Heart right ventricle (tissue), 16 donors: ENCODE measurements at regions of chr15 and their contacts with region 1.

Region 1: GRCh38 chr15:63203451-63204090 is 14.2 kb downstream of the RAB8B start:
- DNase-seq: no peak
- ATAC-seq: peak in 1 of 8 donors; percentile 16
- H3K4me3 ChIP-seq: no peak overlapping the region
- H3K27ac ChIP-seq: no peak overlapping the region
- H3K4me1 ChIP-seq: peaks cover 0 to 82% (median 5%) of the 10 kb centered on the region in 9 donors
- H3K27me3 ChIP-seq: no peaks in the 10 kb centered on the region
- CTCF ChIP-seq: no peak

Region 2: DNA sequence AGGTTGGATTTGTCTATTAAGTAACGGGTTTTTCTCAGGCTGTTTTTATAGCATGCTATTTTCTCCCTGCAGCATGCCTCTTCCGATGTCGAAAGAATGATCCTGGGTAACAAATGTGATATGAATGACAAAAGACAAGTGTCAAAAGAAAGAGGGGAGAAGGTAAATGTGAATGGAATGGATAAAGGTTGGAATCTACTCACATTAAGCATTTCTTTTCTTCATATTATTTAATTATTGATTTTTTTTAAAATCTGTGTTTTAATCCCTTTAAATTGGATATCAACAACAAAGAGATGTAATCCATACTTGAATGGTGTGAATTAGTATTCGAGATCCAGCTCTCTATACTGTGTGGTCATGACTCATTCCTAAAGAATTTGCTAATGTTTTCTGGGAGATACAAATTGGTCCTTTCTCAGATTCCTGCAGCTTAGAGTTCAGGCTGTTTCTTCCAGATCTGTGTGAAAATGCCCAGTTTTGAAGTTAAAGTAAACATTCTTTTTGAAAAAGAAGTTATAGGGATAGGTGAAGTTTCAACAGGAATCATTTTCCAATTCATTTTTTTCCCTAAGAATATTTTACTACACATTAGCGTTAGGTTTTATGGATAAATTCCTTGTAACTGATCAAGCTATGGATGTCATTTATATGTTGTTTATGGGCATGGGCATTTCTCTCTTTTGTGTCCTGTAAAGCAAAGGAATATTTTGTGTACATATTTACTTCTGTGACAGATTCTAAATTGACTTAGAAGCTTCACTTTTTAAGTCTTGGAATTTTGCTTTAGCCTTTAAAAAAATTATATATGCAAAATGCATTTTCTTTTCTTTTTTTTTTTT is 53.1 kb after region 1 on chr15:
- intact Hi-C with region 1: loop called in 1 of 10 experiments (anchors 10 kb)
- DNase-seq: no peak
- ATAC-seq: no peak
- H3K4me3 ChIP-seq: no peak overlapping the region
- H3K27ac ChIP-seq: no peak overlapping the region
- H3K4me1 ChIP-seq: peaks cover 0 to 8% (median 0%) of the 10 kb centered on the region in 9 donors
- H3K27me3 ChIP-seq: no peaks in the 10 kb centered on the region
- CTCF ChIP-seq: no peak